CD4-positive, alpha-beta T cell (primary cell): ENCODE measurements at regions of chr17 and their contacts with region 1.

Region 1: DNA sequence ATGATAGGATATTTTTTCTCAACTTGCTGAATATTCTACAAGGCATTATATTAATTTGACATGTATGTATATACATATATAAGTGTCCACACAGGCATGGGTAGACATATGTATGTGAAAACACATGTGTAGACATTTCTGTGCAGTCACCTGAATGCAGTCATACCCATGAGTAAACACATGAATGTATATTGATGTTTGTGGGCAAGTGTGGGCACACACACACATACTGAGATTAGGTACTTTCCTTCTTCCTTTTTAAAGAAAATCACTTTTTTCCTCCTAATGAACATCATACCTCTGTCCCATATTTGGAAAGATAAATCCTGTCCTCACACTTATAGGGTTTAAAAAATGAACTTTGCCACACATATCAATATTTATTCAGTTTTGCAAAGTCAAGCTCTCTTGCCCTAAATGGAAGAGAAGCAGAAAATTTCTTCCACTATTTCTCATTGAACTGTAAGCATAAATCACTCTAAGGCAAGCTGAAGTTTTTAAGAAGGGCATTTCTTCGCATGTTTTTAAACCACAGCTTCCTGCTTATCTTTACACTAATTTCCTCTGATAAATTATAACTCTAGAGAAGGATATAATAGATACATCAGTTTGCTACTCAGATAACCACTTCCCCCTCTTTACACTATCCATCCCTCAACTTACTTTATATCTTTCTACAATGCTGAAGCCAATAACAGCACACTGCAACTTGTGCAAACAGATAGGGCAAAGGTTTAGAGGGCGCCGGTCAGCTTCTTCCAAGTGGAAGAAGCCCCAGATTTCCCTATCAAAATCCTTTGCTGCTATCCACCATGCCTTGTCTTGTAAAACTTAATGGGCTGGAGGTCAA is 49.6 kb upstream of the LRRC37A3 start:
- DNase-seq: peak in 3 of 14 experiments; percentile 50 to 78 (median 62)
- ATAC-seq: peak; percentile 15
- H3K4me3 ChIP-seq: no peak overlapping the region
- H3K4me3 Mint-ChIP-seq: peak overlapping the region; percentile 76
- H3K27ac ChIP-seq: peak overlapping the region; percentile 48 to 57
- H3K27ac Mint-ChIP-seq: peak overlapping the region; percentile 88
- H3K4me1 ChIP-seq: peaks cover 45% of the 10 kb centered on the region
- H3K4me1 Mint-ChIP-seq: peaks cover 77% of the 10 kb centered on the region
- H3K27me3 ChIP-seq: no peaks in the 10 kb centered on the region
- H3K27me3 Mint-ChIP-seq: no peaks in the 10 kb centered on the region
- CTCF ChIP-seq: no peak

Region 2: DNA sequence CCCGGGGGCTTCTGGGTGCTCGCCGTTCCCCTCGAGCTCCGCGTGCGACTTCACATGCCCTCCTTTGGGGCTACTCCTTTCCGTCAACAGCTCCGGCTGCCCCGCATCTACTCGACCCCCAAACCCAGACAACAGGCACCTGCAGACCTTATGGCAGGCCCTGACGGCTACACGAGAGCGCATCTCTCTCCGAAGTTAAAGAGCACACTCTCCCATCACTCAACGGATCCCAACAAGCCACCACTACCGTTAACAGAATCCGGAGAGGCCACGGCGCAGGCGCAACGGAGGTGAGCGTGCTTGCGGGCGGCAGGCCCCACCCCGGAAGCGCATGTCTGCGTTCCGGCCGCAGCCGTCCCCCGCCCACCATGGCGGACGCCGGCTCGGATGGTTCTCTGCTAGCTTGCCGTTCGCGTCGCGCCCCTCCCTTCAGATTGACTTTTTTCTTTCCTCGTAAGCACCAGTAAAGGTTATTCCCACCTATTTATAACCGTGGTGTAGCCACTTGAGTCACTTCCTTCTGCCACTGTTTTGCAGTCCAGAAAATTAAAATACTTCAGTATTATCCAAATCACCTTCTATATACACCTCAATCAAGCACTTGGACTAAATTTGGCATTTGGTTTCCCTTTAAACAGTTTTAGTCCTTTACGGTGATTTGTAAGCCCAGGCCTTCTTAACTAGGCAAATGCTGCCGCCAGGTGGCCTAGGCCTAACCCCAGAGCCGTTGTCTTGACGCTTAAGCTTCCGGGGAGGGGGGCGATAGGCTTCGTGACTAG is 471.9 kb before region 1 on chr17 and contains the start of gene POLG2:
- CTCF ChIA-PET with region 1: no interaction called
- POLR2A ChIA-PET with region 1: no interaction called
- intact Hi-C with region 1: no loop called
- DNase-seq: peak; percentile 93 to 99 (median 95)
- ATAC-seq: peak; percentile 77
- H3K4me3 ChIP-seq: peak within 1 kb of the TSS; percentile 77
- H3K4me3 Mint-ChIP-seq: peak within 1 kb of the TSS; percentile 100
- H3K27ac ChIP-seq: peak within 1 kb of the TSS; percentile 85 to 91
- H3K27ac Mint-ChIP-seq: peak within 1 kb of the TSS; percentile 99
- H3K4me1 ChIP-seq: peaks cover 44% of the 10 kb centered on the region
- H3K4me1 Mint-ChIP-seq: peaks cover 83% of the 10 kb centered on the region
- H3K27me3 ChIP-seq: no peaks in the 10 kb centered on the region
- H3K27me3 Mint-ChIP-seq: no peaks in the 10 kb centered on the region
- CTCF ChIP-seq: peak; percentile 56
- total RNA-seq, gene POLG2: 32.8 to 34.1 TPM

Region 3: DNA sequence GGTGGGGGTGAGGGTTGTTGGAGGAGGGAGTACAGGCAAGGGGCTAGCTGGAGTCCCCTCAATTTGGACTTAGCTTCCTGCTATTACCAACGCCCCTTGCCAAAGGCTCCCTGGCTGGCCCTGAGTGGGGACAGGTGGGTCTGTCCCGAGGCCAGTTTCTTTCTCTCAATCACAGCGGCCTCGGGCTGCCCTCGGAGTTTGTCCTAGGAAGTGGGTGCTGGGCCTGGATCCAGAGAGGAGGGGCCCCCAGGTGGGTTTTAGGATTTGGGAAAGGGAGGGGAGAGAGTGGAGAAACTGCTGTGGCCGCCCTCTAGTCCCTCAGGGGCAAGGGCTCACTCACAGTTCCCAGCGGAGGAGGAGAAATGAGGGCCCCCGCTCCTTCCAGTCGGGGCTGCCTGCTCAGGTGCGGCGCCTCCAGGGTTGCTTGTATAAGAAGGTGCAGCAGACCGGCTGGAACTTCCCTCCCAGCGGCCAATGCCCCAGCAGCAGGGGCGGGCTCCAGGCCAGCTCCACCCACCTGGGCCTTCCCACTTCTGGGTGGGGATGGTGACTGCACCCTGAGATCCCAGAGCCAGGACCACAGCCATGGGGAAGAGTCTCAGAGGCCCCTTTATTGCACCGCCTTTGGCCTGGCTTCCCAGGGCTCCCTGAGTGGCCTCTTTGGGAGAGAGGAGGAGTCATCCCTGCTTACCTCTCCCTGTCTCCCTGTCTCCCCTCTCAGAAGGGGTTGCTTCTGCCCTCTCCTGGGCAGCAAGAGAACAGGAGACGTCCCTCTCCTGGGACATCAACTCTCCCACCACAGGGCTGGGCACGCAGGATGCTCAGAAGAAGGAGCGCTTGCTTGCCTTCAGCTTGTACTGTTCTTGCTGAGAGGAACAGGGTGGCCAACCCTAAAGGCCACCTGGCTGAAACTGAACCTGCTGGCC is 194.8 kb before region 1 on chr17:
- CTCF ChIA-PET with region 1: no interaction called
- POLR2A ChIA-PET with region 1: no interaction called
- intact Hi-C with region 1: loop called in 1 of 2 experiments (anchors 5 kb)
- DNase-seq: peak in 1 of 14 experiments; percentile 32
- ATAC-seq: no peak
- H3K4me3 ChIP-seq: no peak overlapping the region
- H3K4me3 Mint-ChIP-seq: no peak overlapping the region
- H3K27ac ChIP-seq: no peak overlapping the region
- H3K27ac Mint-ChIP-seq: no peak overlapping the region
- H3K4me1 ChIP-seq: peaks cover 34% of the 10 kb centered on the region
- H3K4me1 Mint-ChIP-seq: peaks cover 17% of the 10 kb centered on the region
- H3K27me3 ChIP-seq: no peaks in the 10 kb centered on the region
- H3K27me3 Mint-ChIP-seq: peaks cover 15% of the 10 kb centered on the region
- CTCF ChIP-seq: no peak